ENCODE measurements at regions of chr1 and their contacts with region 1.

Region 1: GRCh38 chr1:60898987-60899386 is 183.4 kb upstream of the NFIA start:
- DNase-seq: no peak
- ATAC-seq: no peak

Region 2: DNA sequence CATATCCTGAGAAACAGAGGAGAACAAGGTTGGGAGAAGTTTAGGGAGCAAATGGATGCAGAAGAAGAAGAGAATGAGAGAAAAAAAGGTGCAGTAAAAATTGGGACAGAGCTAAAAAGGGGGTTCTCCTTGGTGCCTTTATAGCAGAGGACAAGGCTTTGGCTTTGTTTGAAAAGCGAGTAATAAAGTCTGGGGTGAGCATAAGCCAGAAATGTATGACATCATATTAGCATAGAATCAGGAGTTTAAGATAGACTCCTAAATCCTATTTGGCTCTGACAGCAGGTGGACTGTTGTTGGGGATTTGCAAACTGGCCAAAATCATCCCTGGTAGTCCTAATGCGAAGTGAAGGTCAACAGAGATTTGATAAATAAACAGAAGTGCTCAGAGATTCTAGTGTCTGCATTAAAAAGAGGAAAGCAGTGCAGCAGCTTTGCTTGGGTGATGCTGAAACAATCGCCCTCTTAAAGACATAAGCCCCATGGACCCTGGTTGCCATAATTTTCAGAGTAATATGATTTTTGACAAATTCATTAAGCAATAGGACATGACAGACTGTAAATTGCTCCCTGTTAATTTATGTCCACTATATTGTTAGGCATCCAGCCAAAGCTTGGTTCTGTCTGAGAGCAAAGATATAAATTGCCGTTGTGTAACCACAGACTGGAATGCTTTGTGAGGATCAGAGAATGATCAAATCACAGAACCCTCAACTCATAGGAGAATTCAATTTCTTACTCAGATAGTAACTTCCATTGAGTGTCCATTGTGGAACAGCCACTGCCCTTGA is 201.6 kb before region 1 on chr1:
- intact Hi-C with region 1: loop called in 1 of 2 experiments (anchors 10 kb)
- DNase-seq: no peak
- ATAC-seq: no peak

Region 3: GRCh38 chr1:61210435-61211154 is 311.6 kb after region 1 on chr1:
- intact Hi-C with region 1: no loop called
- DNase-seq: no peak
- ATAC-seq: no peak

Measured in left cardiac atrium (tissue), 4 donors.